ENCODE measurements at regions of chr10 and their contacts with region 1.

Region 1: DNA sequence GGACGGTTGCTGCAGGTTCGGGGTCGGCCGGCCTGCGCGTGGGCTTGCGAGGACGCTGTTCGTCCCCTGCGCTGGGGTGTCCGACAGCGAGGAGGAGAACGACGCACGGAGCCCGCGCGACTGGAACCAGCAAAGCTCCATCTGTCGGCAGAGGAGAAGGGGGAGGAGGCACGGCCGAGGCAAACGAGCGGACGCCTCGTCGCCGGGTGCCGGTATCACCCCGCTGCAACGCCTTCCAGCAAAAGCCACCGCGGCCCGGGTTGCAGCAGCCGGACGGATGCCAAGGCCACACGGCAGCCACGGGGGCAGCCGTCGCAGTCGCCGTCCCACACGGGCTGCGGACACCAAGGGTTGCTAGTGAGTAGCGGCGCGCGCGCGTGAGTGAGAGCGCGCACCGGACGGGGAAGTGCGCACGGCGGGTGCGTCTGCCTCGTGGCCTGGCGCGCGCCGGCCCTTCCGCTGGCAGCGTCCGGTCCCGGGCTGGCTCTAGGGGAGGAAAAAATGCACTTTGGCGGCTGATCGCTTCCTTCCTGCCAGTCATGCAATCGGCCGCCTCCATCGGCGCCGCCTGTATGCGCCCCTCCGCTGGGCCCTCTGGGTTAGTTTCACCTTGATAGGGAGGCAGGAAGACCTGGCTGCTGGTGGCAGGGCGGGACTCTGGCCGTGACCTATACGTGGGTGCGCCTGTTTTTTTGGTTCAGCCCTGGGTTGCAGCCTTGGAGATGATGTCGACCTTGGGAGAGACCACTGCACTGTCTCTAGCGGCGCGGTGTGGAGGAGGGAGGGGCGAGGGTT is 434 bp downstream of the STAMBPL1 start:
- DNase-seq: peak; percentile 74 to 81 (median 78)
- H3K4me3 ChIP-seq: peak overlapping the region; percentile 70 to 71
- H3K4me3 Mint-ChIP-seq: peak overlapping the region; percentile 98 to 99 (median 99)
- H3K27ac ChIP-seq: peak overlapping the region; percentile 70
- H3K27ac Mint-ChIP-seq: peak overlapping the region; percentile 91 to 98 (median 96)
- H3K4me1 ChIP-seq: peaks cover 61% of the 10 kb centered on the region
- H3K4me1 Mint-ChIP-seq: peaks cover 48 to 78% (median 57%) of the 10 kb centered on the region in 4 donors
- H3K27me3 ChIP-seq: no peaks in the 10 kb centered on the region
- H3K27me3 Mint-ChIP-seq: no peaks in the 10 kb centered on the region

Region 2: GRCh38 chr10:87817609-87818504 is 1062.6 kb before region 1 on chr10 and contains the start of gene ATAD1:
- CTCF ChIA-PET with region 1: interaction called, 3 read pairs
- POLR2A ChIA-PET with region 1: interaction called, 4 read pairs
- intact Hi-C with region 1: loop called (anchors 1 kb)
- DNase-seq: peak; percentile 89 to 91 (median 91)
- H3K4me3 ChIP-seq: peak within 1 kb of the TSS; percentile 85 to 95
- H3K4me3 Mint-ChIP-seq: peak within 1 kb of the TSS; percentile 88 to 98 (median 94)
- H3K27ac ChIP-seq: peak within 1 kb of the TSS; percentile 94
- H3K27ac Mint-ChIP-seq: peak within 1 kb of the TSS; percentile 94 to 99 (median 98)
- H3K4me1 ChIP-seq: peaks cover 46% of the 10 kb centered on the region
- H3K4me1 Mint-ChIP-seq: peaks cover 27 to 43% (median 35%) of the 10 kb centered on the region in 4 donors
- H3K27me3 ChIP-seq: no peaks in the 10 kb centered on the region
- H3K27me3 Mint-ChIP-seq: no peaks in the 10 kb centered on the region
- total RNA-seq, gene ATAD1: 46.5 to 52.0 TPM

Region 3: GRCh38 chr10:88810196-88810961 is 70.1 kb before region 1 on chr10:
- CTCF ChIA-PET with region 1: interaction called, 14 read pairs
- POLR2A ChIA-PET with region 1: interaction called, 6 read pairs
- intact Hi-C with region 1: no loop called
- DNase-seq: peak; percentile 42 to 56 (median 45)
- H3K4me3 ChIP-seq: no peak overlapping the region
- H3K4me3 Mint-ChIP-seq: no peak overlapping the region
- H3K27ac ChIP-seq: no peak overlapping the region
- H3K27ac Mint-ChIP-seq: peak overlapping the region in 2 of 7 donors; percentile 16 to 30
- H3K4me1 ChIP-seq: peaks cover 10% of the 10 kb centered on the region
- H3K4me1 Mint-ChIP-seq: peaks cover 10 to 18% (median 15%) of the 10 kb centered on the region in 4 donors
- H3K27me3 ChIP-seq: no peaks in the 10 kb centered on the region
- H3K27me3 Mint-ChIP-seq: no peaks in the 10 kb centered on the region

Region 4: GRCh38 chr10:88828310-88828709 is 52.2 kb before region 1 on chr10:
- CTCF ChIA-PET with region 1: interaction called, 40 read pairs
- POLR2A ChIA-PET with region 1: interaction called, 38 read pairs
- intact Hi-C with region 1: no loop called
- DNase-seq: no peak
- H3K4me3 ChIP-seq: no peak overlapping the region
- H3K4me3 Mint-ChIP-seq: no peak overlapping the region
- H3K27ac ChIP-seq: no peak overlapping the region
- H3K27ac Mint-ChIP-seq: no peak overlapping the region
- H3K4me1 ChIP-seq: peaks cover 67% of the 10 kb centered on the region
- H3K4me1 Mint-ChIP-seq: peaks cover 46 to 80% (median 67%) of the 10 kb centered on the region in 4 donors
- H3K27me3 ChIP-seq: no peaks in the 10 kb centered on the region
- H3K27me3 Mint-ChIP-seq: no peaks in the 10 kb centered on the region

Region 5: DNA sequence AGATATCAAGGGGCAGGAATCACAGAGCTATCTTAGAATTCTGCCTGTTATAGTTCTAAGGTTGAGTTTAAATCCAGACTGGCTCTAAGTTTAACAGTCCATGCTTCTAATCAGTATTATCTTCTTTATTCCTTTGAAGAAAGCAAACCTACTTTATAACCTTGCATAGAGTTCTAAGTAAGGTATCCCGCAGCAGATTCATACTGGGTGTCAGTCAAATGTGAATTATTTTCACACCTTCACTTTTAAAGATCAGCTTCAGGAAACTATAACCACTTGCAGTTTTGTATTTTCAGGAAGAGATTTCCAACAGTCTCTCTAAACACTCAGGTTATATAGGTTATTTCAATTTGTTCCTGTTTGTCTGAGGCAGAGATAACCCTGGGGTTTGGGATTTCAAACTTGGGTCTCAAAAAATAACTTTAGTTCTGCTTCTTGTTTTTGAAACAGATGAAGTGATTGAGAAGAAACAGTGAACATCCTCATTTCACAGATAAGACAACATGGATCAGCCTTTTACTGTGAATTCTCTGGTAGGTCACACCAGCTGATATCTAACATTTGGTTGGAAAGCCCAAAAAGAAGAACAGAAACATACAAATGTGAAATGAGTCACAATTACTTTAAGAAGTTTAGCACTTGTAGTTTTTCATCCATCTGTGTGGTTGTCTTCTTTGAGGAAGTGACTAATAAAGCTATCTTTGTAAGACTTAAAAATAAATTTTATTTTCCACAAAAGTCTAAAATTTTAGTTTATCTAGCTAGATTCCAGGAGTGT is 20.9 kb after region 1 on chr10:
- CTCF ChIA-PET with region 1: interaction called, 10 read pairs
- POLR2A ChIA-PET with region 1: interaction called, 9 read pairs
- intact Hi-C with region 1: loop called (anchors 2 kb)
- DNase-seq: no peak
- H3K4me3 ChIP-seq: no peak overlapping the region
- H3K4me3 Mint-ChIP-seq: no peak overlapping the region
- H3K27ac ChIP-seq: no peak overlapping the region
- H3K27ac Mint-ChIP-seq: peak overlapping the region in 2 of 7 donors; percentile 23 to 49
- H3K4me1 ChIP-seq: peaks cover 47% of the 10 kb centered on the region
- H3K4me1 Mint-ChIP-seq: peaks cover 32 to 44% (median 38%) of the 10 kb centered on the region in 4 donors
- H3K27me3 ChIP-seq: no peaks in the 10 kb centered on the region
- H3K27me3 Mint-ChIP-seq: no peaks in the 10 kb centered on the region

Region 6: DNA sequence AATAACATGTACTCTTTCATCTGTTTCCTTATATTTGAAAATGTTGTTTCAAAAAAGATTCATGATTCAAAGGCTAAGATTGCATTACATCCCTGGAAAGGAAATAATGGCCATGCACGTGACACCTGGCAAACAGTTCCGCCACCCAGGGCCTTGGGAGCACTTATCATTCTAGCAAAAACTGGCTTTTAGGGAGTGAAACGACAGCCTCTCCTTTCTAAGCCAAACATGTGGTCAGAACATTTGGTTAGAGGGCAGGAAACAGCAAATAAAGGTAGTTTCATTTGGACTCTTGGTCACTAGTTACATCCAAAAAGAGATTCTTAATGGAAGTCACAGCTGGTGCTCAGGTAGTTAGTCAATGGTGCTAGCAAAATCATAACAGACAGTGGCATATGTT is 193.6 kb after region 1 on chr10:
- CTCF ChIA-PET with region 1: no interaction called
- POLR2A ChIA-PET with region 1: no interaction called
- intact Hi-C with region 1: no loop called
- DNase-seq: no peak
- H3K4me3 ChIP-seq: no peak overlapping the region
- H3K4me3 Mint-ChIP-seq: no peak overlapping the region
- H3K27ac ChIP-seq: no peak overlapping the region
- H3K27ac Mint-ChIP-seq: no peak overlapping the region
- H3K4me1 ChIP-seq: no peaks in the 10 kb centered on the region
- H3K4me1 Mint-ChIP-seq: peaks cover 0 to 4% (median under 1%) of the 10 kb centered on the region in 4 donors
- H3K27me3 ChIP-seq: no peaks in the 10 kb centered on the region
- H3K27me3 Mint-ChIP-seq: peaks cover 0 to 4% of the 10 kb centered on the region in 2 donors

Measured in CD4-positive, alpha-beta memory T cell (primary cell).